ENCODE measurements at regions of chr6 and their contacts with region 1.

Region 1: DNA sequence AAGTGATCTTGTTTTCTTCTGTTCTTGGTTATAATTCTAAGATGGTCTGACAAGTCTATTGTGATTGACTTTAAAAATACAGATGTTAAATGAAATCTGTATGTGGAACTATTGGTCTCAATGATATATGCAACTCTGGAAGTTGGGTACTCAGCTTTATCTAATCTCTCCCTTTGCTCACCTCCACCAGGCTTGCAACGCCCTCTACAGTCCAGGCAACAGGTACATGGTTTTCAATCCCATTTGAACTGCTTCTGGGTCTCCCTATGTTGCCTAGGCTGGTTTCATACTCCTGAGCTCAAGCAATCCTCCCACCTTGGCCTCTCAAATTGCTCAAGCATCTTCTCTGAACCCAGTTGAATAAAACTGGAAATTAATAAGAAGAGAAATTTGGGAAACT is 25.6 kb upstream of the HLA-DQB1 start:
- DNase-seq: peak in 1 of 2 experiments; percentile 2
- H3K4me3 ChIP-seq: no peak overlapping the region
- H3K27ac ChIP-seq: no peak overlapping the region
- H3K4me1 ChIP-seq: no peaks in the 10 kb centered on the region
- H3K27me3 ChIP-seq: no peaks in the 10 kb centered on the region
- CTCF ChIP-seq: peak; percentile 49 to 79 (median 72)
- EP300 ChIP-seq: no peak
- POLR2A ChIP-seq: no peak
- RAD21 ChIP-seq: peak; percentile 89 to 94

Region 2: GRCh38 chr6:32424589-32425300 is 267.3 kb before region 1 on chr6:
- CTCF ChIA-PET with region 1: interaction called, 15 read pairs
- POLR2A ChIA-PET with region 1: no interaction called
- DNase-seq: no peak
- H3K4me3 ChIP-seq: no peak overlapping the region
- H3K27ac ChIP-seq: no peak overlapping the region
- H3K4me1 ChIP-seq: no peaks in the 10 kb centered on the region
- H3K27me3 ChIP-seq: no peaks in the 10 kb centered on the region
- CTCF ChIP-seq: no peak
- EP300 ChIP-seq: no peak
- POLR2A ChIP-seq: no peak
- RAD21 ChIP-seq: no peak

Region 3: DNA sequence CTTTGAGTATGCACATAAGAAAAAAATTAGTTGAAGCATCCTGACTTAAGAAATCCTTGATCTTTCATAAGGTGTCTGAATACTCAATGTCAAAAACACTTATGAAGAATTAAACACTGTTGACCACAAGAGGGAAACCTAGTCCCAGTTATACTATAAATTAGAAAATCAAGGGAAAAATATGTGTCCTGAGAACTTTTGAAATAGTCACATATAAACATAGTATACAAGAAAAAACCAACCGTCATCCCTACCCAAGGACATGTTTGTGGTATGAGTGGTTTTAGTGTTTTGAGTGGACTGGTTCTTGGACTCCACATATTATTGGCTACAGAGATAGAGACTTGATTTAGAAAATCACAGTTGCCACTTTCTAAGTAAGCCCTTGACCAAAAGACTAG is 260.0 kb before region 1 on chr6:
- CTCF ChIA-PET with region 1: interaction called, 11 read pairs
- POLR2A ChIA-PET with region 1: no interaction called
- DNase-seq: no peak
- H3K4me3 ChIP-seq: no peak overlapping the region
- H3K27ac ChIP-seq: no peak overlapping the region
- H3K4me1 ChIP-seq: no peaks in the 10 kb centered on the region
- H3K27me3 ChIP-seq: no peaks in the 10 kb centered on the region
- CTCF ChIP-seq: peak in 2 of 3 experiments; percentile 29 to 30; a peak in 2 of 4 replicates
- EP300 ChIP-seq: no peak
- POLR2A ChIP-seq: no peak
- RAD21 ChIP-seq: peak in 1 of 2 experiments; percentile 66

Region 4: DNA sequence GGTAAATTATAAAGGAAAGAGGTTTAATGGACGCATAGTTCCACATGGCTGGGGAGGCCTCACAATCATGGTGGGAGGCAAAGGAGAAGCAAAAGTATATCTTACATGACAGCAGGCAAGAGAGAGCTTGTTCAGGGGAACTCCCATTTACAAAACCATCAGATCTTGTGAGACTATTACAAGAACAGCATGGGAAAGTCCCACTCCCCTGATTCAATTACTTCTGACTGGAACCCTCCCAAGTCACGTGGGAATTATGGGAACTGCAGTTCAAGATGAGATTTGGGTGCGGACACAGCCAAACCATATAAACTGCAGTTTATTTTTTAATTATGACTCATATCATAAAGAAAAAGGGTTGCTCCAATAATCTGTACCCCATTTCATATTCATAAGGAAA is 26.9 kb after region 1 on chr6:
- CTCF ChIA-PET with region 1: no interaction called
- POLR2A ChIA-PET with region 1: no interaction called
- DNase-seq: no peak
- H3K4me3 ChIP-seq: no peak overlapping the region
- H3K27ac ChIP-seq: no peak overlapping the region
- H3K4me1 ChIP-seq: no peaks in the 10 kb centered on the region
- H3K27me3 ChIP-seq: no peaks in the 10 kb centered on the region
- CTCF ChIP-seq: no peak
- EP300 ChIP-seq: no peak
- POLR2A ChIP-seq: no peak
- RAD21 ChIP-seq: no peak

Region 5: DNA sequence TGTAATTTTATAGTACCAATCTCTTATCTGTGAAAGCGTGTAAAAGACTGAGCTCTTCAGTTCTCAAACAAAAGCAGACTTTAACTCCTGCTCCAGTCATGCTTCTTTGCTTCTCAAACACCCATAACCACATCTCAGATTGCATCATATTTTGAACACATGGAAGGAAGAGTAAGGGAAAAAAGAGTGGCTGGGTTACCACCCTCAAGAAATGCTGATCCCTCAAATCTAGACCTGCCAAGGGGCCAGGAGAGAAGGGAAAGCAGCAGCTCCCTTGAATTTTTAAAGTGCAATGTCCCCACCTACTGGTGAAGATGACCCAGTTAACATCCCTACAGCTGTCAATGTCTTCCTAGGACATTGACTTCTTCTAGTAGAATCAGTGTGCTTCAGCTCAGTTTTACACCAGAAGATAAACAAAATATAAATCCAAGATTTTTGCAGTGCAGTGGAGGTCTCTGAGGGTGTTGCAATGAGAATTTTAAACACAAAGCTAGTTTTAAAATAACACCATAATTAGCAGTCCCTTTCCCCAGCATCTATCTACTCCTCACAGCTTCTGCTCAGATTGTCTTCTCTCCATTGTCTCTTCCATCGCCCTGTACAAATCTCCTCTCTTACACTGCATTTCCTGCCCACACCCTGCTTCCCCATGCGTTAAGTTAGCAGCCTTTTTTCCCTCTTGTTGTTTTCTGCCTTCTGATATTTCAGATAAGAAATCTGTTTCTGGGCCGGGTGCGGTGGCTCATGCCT is 93.9 kb after region 1 on chr6:
- CTCF ChIA-PET with region 1: interaction called, 10 read pairs
- POLR2A ChIA-PET with region 1: no interaction called
- DNase-seq: peak in 1 of 2 experiments; percentile 49
- H3K4me3 ChIP-seq: no peak overlapping the region
- H3K27ac ChIP-seq: no peak overlapping the region
- H3K4me1 ChIP-seq: no peaks in the 10 kb centered on the region; a peak in 1 of 7 replicates
- H3K27me3 ChIP-seq: no peaks in the 10 kb centered on the region
- CTCF ChIP-seq: peak; percentile 15 to 75 (median 66)
- EP300 ChIP-seq: no peak
- POLR2A ChIP-seq: no peak
- RAD21 ChIP-seq: peak; percentile 86 to 88